Stomach (tissue), 19 donors: ENCODE measurements at regions of chr17 and their contacts with region 1.

Region 1: GRCh38 chr17:72730077-72730476 is 362.4 kb downstream of the SLC39A11 start:
- DNase-seq: peak in 1 of 2 donors; percentile 77
- H3K4me3 ChIP-seq: no peak overlapping the region
- H3K27ac ChIP-seq: no peak overlapping the region
- H3K4me1 ChIP-seq: peaks cover 0 to 14% (median 2%) of the 10 kb centered on the region in 4 donors
- H3K27me3 ChIP-seq: no peaks in the 10 kb centered on the region
- CTCF ChIP-seq: no peak
- EP300 ChIP-seq: no peak
- POLR2A ChIP-seq: no peak

Region 2: GRCh38 chr17:72839131-72839725 is 109.2 kb after region 1 on chr17:
- intact Hi-C with region 1: no loop called
- DNase-seq: no peak
- H3K4me3 ChIP-seq: no peak overlapping the region
- H3K27ac ChIP-seq: no peak overlapping the region
- H3K4me1 ChIP-seq: no peaks in the 10 kb centered on the region
- H3K27me3 ChIP-seq: no peaks in the 10 kb centered on the region
- CTCF ChIP-seq: no peak
- EP300 ChIP-seq: no peak
- POLR2A ChIP-seq: no peak

Region 3: GRCh38 chr17:73166731-73167581 is 436.9 kb after region 1 on chr17:
- intact Hi-C with region 1: loop called (anchors 10 kb)
- DNase-seq: no peak
- H3K4me3 ChIP-seq: peak overlapping the region; percentile 46 to 60 (median 54)
- H3K27ac ChIP-seq: peak overlapping the region in 1 of 5 donors; percentile 32
- H3K4me1 ChIP-seq: peaks cover 23 to 43% (median 33%) of the 10 kb centered on the region in 4 donors
- H3K27me3 ChIP-seq: peaks cover 6 to 65% (median 46%) of the 10 kb centered on the region in 3 donors
- CTCF ChIP-seq: no peak
- EP300 ChIP-seq: no peak
- POLR2A ChIP-seq: no peak